Head of caudate nucleus (tissue), 42 donors: ENCODE measurements at regions of chr19 and their contacts with region 1.

Region 1: GRCh38 chr19:11482384-11483050 is 1.7 kb upstream of the ELAVL3 start:
- DNase-seq: peak; percentile 75 to 96 (median 91)

Region 2: DNA sequence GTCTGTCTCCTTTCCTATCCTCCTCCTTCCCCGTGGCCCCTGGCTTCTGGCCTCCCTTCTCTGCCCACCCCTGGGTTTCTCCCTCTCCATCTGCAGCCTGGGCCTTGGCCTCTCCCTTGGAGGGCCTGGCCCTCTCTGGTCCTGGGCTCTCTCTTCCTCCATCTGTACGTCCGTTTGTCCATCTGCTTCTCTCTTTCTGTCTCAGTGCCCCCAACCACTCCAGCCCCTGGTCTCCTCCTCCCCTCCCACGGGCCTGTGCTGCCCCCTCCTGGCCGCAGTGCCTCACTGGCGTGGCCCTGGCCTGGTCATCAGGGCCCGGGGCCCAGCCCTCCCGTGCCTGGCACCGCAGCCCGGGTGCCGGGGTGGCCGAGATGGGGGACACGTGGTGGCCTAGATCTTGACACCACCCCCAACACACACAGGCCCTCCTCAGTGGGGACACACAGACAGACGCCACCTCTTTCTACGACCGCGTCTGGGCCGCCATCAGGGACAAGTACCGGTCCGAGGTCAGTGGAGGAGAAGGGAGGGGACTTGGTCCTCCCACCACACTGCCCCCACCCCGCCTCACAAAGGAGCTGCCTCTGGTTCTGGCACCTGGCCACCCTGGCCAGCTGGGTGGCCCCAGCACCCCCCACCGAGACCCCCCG is 35.7 kb before region 1 on chr19:
- intact Hi-C with region 1: loop called (anchors 5 kb)
- DNase-seq: peak; percentile 73 to 96 (median 88)

Region 3: GRCh38 chr19:11519138-11519537 is 36.6 kb after region 1 on chr19:
- intact Hi-C with region 1: no loop called
- DNase-seq: no peak

Region 4: GRCh38 chr19:11649941-11650340 is 167.4 kb after region 1 on chr19:
- intact Hi-C with region 1: no loop called
- DNase-seq: no peak

Region 5: DNA sequence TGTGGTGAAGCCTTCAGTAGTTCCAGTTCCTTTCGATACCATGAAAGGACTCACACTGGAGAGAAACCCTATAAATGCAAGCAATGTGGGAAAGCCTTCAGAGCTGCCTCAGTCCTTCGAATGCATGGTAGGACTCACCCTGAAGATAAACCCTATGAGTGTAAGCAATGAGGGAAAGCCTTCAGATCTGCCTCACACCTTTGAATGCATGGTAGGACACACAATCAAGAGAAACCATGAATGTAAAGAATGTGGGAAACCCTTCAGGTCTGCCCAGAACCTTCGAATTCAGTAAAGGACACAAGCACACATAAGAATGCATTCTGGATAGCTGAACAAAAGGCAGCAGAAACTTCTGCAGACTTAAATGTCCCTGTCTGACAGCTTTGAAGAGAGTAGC is 423.4 kb after region 1 on chr19:
- intact Hi-C with region 1: no loop called
- DNase-seq: no peak